Activated T-helper 1 cell treated with anti-CD3 and anti-CD28 coated beads, Interleukin-12 subunit alpha, Interleukin-12 subunit beta, Interleukin-2, Interleukin-4 antibody, amounts not matched to agents 30 ng/mL and 10 ng/mL and 1 ng/mL, durations not matched to agents 14 hours and 24 hours and 36 hours (primary cell): ENCODE measurements at regions of chr3 and their contacts with region 1.

Region 1: GRCh38 chr3:108090701-108091451 is at the start of gene CD47:
- DNase-seq: peak; percentile 93
- H3K4me3 Mint-ChIP-seq: peak within 1 kb of the TSS; percentile 95
- H3K27ac Mint-ChIP-seq: peak within 1 kb of the TSS; percentile 99
- H3K4me1 Mint-ChIP-seq: peaks cover 23% of the 10 kb centered on the region
- H3K27me3 Mint-ChIP-seq: peaks cover 7% of the 10 kb centered on the region
- total RNA-seq, gene CD47: 98.3 and 105 TPM in 2 replicates

Region 2: GRCh38 chr3:107522510-107523288 is 568.2 kb before region 1 on chr3 and contains the start of gene BBX:
- intact Hi-C with region 1: loop called (anchors 10 kb)
- DNase-seq: peak; percentile 88
- H3K4me3 Mint-ChIP-seq: peak within 1 kb of the TSS; percentile 92
- H3K27ac Mint-ChIP-seq: peak within 1 kb of the TSS; percentile 96
- H3K4me1 Mint-ChIP-seq: peaks cover 32% of the 10 kb centered on the region
- H3K27me3 Mint-ChIP-seq: peaks cover 4% of the 10 kb centered on the region
- total RNA-seq, gene BBX: 38.1 and 45.1 TPM in 2 replicates

Region 3: DNA sequence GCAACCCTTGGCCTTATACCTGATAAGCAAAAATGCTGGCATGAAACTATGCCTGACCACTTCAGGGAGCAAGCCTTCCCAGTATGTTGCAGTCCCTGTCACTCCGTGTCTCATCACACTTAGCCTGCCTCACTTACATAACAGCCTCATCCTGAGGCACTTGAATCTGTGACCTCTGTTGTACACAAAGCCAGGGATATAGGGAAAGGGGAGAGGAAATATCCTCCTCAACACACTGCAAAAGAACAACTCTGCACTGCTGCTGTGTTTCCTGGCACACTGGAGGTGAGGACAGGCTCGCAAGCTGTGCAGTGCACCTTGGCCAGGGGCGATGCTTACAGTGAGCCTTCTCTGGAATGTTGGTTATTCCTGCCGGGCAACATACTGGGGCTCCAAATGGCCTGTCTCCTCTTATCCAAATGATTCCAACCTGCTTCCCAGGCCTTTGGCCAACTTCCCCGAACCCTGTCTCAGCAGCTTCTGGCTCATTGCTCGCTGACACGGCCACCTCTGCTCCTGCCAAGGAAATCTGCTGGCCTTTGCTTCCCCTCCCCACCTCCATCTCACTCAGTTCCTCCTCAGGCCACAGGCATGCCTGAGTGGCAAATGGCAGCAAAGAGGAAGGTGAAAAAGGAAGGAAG is 109.3 kb before region 1 on chr3:
- intact Hi-C with region 1: no loop called
- DNase-seq: no peak
- H3K4me3 Mint-ChIP-seq: no peak overlapping the region
- H3K27ac Mint-ChIP-seq: no peak overlapping the region
- H3K4me1 Mint-ChIP-seq: peaks cover 32% of the 10 kb centered on the region
- H3K27me3 Mint-ChIP-seq: no peaks in the 10 kb centered on the region

Region 4: DNA sequence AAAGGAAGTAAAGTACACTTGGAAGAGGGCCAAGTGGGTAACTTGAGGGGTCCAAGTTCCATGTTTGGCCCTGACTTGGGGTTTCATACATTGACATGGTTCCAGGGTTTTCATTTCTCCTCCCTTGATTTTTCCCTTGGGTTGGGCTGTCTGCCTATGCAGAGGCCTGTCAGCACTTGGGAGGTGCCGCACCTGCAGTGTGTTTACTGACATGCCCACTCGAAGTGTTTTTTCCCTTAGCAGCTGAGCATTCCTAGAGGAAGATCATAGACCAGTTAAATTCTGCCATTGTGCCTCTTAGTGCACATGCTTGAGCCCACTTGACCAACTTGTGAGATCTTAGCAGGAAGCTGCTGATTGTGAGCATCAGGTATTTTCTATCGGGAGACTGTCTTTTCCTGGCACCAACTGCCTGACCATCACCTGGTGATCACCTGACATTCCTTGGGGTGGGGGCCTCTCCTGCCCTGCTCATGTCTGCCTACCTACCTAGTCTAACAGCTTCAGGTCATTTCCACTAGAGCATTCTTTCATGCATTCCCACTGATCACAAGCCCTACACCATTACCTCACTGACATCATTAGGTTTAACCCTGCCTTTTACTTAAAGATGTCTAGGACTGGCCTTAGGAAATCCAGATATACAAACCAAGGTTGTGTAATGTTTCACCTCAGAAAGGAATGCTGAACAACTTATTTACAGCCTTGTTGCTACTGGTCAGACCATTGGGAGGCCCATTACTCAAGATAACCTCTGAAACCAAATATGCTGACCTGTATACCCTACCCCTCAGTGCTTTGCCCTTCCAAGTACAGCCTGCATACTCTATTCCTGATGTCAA is 68.4 kb before region 1 on chr3:
- intact Hi-C with region 1: no loop called
- DNase-seq: no peak
- H3K4me3 Mint-ChIP-seq: no peak overlapping the region
- H3K27ac Mint-ChIP-seq: no peak overlapping the region
- H3K4me1 Mint-ChIP-seq: no peaks in the 10 kb centered on the region
- H3K27me3 Mint-ChIP-seq: no peaks in the 10 kb centered on the region

Region 5: DNA sequence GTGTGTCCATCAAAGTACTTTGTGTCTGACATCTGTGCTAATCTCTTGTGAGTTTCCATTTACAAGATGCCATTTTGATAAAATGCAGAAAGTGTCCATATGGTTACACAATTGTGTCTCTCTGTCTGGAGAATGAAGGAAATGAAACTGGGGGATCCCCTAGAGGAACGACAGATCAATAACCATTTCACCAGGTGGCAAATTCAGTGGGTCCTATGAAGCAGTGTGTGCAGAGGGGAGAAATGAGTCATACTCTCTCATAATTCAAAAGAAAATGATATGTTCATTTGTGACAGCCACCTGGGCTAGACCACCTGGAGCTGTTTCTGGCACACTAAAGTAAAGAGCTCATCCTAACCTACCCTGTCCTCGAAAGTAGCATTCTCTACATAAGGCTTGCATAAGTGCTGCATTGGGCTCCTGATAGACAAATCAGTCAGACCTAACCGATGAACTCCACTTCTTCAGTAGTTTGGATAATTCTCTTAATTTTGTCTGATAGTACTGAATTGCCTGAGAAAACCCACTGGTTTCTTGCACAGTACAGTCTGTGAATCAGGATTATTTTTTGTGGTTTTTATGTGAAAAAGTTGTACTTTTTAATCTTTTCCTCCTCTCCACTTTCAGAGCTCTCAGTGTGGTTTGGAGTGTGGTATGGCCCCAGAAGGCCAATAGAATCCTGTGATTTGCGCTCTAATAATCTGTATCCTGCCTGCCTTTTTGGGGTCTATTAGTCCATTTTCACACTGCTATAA is 10.2 kb after region 1 on chr3:
- intact Hi-C with region 1: loop called (anchors 1 kb)
- DNase-seq: peak; percentile 32
- H3K4me3 Mint-ChIP-seq: peak overlapping the region; percentile 1
- H3K27ac Mint-ChIP-seq: peak overlapping the region; percentile 77
- H3K4me1 Mint-ChIP-seq: peaks cover 29% of the 10 kb centered on the region
- H3K27me3 Mint-ChIP-seq: peaks cover 13% of the 10 kb centered on the region

Region 6: DNA sequence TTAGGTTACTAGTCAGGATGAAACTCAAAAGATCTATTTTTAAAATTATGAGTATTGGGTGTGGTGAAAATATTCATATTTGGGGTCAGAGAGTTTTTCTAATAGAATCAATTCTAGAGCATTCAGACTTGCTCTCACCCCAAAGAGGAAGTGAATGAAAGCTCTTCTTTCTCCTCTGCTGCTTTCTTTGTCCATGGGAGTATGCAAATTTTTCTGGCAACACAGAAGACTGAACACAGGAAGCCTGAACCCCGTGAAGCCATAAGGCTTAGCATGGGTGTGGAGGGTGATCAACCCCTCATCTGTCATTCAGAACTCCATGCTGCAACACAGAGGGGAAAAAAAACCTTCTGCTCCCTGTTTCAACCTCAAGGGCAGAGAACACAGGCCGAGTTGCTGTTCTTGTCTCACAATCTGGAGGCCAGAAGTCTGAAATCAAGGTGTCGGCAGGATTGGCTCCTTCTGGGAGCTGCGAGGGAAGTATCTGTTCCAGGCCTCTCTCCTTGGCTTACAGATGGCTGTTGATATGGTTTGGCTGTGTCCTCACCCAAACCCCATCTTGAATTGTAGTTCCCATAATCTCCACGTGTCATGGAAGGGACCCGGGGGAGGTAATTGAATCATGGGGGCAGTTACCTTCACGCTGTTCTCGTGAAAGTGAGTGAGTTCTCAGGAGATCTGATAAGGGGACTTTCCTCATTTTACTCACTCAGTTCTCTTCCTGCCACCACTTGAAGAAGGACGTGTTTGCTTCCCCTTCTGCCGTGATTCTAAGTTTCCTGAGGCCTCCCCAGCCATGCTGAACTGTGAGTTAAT is 33.7 kb after region 1 on chr3:
- intact Hi-C with region 1: loop called (anchors 1 kb)
- DNase-seq: peak; percentile 67
- H3K4me3 Mint-ChIP-seq: peak overlapping the region; percentile 89
- H3K27ac Mint-ChIP-seq: peak overlapping the region; percentile 96
- H3K4me1 Mint-ChIP-seq: peaks cover 59% of the 10 kb centered on the region
- H3K27me3 Mint-ChIP-seq: peaks cover 2% of the 10 kb centered on the region

Region 7: DNA sequence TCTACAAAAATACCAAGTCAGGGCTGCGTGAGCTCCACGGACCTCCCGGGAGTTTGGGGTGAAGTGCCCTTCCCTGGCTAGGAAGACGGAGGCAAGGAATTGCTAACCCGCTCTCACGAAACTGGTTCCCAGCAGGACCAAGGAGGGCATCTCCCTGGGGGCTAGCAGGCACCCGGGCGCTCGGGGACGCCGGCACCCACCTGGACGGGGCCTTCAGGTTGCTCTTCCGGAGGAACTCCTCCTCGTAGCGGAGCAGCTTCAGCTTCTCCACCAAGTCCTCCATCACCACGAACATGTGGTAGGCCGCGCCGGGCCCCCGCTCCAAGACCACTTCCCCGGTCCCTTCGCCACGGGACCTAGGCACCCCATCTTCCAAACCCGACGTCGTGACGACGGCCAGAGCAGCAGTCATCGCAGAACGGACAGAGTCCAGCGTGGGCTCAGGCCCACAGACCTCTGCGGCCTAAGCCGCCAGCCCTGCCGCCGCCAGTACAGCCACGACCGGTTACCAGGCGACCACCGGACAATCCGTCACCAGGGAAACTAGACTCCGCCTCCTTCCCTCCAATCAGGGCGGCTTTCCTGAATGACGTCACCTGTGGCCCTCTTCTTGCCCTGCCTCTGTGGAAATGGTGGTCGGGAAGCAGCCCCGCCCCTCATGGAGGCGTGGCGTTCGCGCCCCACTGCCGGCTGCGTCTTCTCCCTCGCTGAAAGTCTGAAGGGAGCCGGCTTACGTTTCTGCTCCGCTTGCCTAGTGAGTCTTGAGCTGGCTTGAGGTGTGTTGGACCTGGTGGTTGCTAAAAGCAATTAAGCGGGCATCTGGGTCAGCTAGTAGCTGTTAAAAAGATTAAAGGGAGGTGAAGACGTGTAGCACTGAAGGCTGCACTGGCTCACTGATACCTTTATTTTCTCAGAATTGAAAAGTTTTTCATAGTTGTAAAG is 131.3 kb after region 1 on chr3 and contains the start of gene IFT57:
- intact Hi-C with region 1: loop called (anchors 1 kb)
- DNase-seq: peak; percentile 94
- H3K4me3 Mint-ChIP-seq: peak within 1 kb of the TSS; percentile 87
- H3K27ac Mint-ChIP-seq: peak within 1 kb of the TSS; percentile 93
- H3K4me1 Mint-ChIP-seq: peaks cover 51% of the 10 kb centered on the region
- H3K27me3 Mint-ChIP-seq: no peaks in the 10 kb centered on the region
- total RNA-seq, gene IFT57: 27.0 and 34.9 TPM in 2 replicates

Region 8: DNA sequence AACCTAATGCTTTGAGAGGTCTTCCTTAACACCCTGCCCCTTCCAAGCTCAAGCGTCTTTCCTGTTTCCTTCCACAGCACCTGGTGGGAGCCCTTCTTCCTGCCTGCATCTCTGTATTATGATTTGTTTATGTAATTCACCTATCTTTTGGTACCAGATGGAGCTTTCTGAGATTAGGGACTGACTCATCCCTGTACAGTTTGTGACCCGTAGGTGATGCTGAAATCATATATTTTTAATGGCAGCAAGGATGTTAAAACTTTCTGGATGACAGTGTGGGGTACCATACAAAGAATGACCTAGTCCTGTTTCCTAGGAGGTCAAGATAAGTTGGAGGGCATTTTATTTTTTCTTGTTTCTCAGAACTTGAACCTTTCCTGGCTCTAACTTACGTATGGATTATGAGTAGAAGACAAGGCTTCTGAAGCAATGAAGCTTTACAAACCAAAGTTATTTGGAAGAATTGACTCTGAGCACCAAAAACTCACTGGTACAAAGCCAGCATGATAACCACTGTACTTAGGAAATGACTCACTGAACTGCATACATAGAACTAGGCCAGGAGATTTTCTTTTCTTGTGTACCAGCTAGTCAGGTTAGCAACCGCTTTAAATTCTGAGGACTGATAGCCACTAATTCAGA is 252.1 kb after region 1 on chr3:
- intact Hi-C with region 1: loop called (anchors 5 kb)
- DNase-seq: no peak
- H3K4me3 Mint-ChIP-seq: peak overlapping the region; percentile 5
- H3K27ac Mint-ChIP-seq: peak overlapping the region; percentile 59
- H3K4me1 Mint-ChIP-seq: peaks cover 37% of the 10 kb centered on the region
- H3K27me3 Mint-ChIP-seq: peaks cover 4% of the 10 kb centered on the region

Region 9: GRCh38 chr3:108477511-108478147 is 386.8 kb after region 1 on chr3:
- intact Hi-C with region 1: loop called (anchors 2 kb)
- DNase-seq: peak; percentile 50
- H3K4me3 Mint-ChIP-seq: no peak overlapping the region
- H3K27ac Mint-ChIP-seq: no peak overlapping the region
- H3K4me1 Mint-ChIP-seq: no peaks in the 10 kb centered on the region
- H3K27me3 Mint-ChIP-seq: peaks cover 13% of the 10 kb centered on the region